ENCODE measurements at regions of chr3 and their contacts with region 1.

Region 1: GRCh38 chr3:52851348-52851747 is 16.5 kb upstream of the MUSTN1 start:
- DNase-seq: no peak
- H3K4me3 ChIP-seq: no peak overlapping the region
- CTCF ChIP-seq: peak; percentile 59

Region 2: GRCh38 chr3:52934630-52935530 is 83.5 kb after region 1 on chr3:
- CTCF ChIA-PET with region 1: interaction called, 11 read pairs
- POLR2A ChIA-PET with region 1: no interaction called
- DNase-seq: peak; percentile 7
- H3K4me3 ChIP-seq: no peak overlapping the region
- CTCF ChIP-seq: peak; percentile 80